H1 (cell line): ENCODE measurements at regions of chr1 and their contacts with region 1.

Region 1: DNA sequence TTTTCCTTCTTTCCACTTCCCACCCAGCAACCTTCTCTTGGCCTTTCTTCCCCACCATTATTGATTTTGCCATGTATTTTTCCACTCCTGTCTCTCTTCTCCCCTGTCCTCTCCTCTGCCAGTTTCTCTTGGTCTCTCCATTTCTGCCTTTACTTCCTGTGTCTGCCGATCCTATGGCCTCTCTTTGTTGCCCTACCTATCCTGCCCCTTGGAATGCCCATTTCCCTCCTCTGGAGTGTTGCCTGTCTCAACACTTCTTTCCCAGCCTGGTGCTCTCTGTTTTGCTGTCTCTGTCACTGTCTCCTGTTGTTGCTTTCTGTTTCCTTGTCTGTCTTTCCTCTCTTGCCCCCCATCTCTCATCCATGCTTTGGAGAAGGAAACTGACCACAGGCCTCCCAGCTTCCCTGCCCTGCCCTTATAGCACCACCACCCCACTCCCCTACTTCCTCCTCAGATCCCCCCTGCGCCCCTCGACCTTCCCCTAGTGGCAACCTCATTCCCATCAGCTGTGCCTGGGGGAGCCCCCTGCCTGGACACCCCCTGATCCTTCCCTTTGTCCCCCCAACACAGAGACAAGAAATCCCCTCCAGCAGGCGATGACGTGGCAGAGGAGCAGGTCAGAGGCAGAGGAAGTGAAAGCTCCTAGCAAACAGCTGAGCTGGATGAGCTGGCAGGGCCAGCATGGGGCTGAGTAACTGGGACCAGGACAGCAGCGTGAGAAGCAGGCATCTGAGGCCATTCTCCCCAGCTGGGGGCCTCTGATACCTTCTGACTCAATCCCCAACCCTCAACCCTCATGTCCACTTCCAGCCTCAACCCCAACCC is 6.6 kb upstream of the ETV3L start:
- DNase-seq: no peak
- H3K4me3 ChIP-seq: no peak overlapping the region
- H3K27ac ChIP-seq: no peak overlapping the region
- H3K4me1 ChIP-seq: peaks cover 0 to 7% (median under 1%) of the 10 kb centered on the region in 4 experiments; a peak in 4 of 7 replicates
- H3K27me3 ChIP-seq: peaks cover 0 to 3% (median 1%) of the 10 kb centered on the region in 4 experiments; a peak in 3 of 7 replicates
- CTCF ChIP-seq: no peak
- EP300 ChIP-seq: no peak
- POLR2A ChIP-seq: no peak
- RAD21 ChIP-seq: no peak

Region 2: DNA sequence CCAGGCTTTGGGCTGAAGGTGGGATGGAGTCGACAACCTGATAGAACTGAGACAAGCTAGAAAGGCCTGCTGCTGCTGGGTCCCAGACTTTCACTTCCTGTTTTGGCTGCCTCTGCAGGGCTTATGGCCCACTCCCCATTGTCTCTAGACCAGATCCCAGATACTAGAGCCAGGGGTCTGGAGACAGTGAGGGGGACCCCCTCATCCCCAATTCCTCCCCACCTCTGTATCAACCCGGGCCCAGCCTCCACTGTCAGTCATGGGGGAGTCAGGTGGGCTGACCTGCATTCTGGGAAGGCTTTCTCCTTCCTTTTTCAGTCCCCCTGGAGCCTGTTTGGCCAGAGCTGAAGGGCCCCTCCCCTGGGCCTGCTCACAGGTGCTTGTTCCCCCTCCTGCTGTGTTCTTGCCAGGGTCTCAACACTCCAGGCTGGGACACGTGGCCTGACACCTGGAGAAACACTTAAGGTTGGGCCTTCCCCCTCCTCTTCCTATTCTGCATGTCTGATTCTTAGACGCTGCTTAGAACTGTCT is 11.4 kb after region 1 on chr1:
- CTCF ChIA-PET with region 1: interaction called, 35 read pairs
- POLR2A ChIA-PET with region 1: interaction called, 6 read pairs
- DNase-seq: peak in 1 of 2 experiments; percentile 52
- H3K4me3 ChIP-seq: no peak overlapping the region
- H3K27ac ChIP-seq: no peak overlapping the region; the same call in 1 of the 2 replicates
- H3K4me1 ChIP-seq: peaks cover 18 to 42% (median 27%) of the 10 kb centered on the region in 4 experiments
- H3K27me3 ChIP-seq: peaks cover 0 to 3% (median under 1%) of the 10 kb centered on the region in 4 experiments; a peak in 4 of 7 replicates
- CTCF ChIP-seq: no peak
- EP300 ChIP-seq: no peak
- POLR2A ChIP-seq: no peak
- RAD21 ChIP-seq: no peak

Region 3: GRCh38 chr1:157199421-157199755 is 93.2 kb after region 1 on chr1:
- CTCF ChIA-PET with region 1: no interaction called
- POLR2A ChIA-PET with region 1: no interaction called
- DNase-seq: no peak
- H3K4me3 ChIP-seq: no peak overlapping the region
- H3K27ac ChIP-seq: no peak overlapping the region
- H3K4me1 ChIP-seq: no peaks in the 10 kb centered on the region; a peak in 1 of 7 replicates
- H3K27me3 ChIP-seq: peaks cover 0 to 3% (median 0%) of the 10 kb centered on the region in 4 experiments; a peak in 1 of 7 replicates
- CTCF ChIP-seq: no peak
- EP300 ChIP-seq: no peak
- POLR2A ChIP-seq: no peak
- RAD21 ChIP-seq: no peak